Activated T-helper 2 cell treated with anti-CD3 and anti-CD28 coated beads, Interferon-gamma antibody, Interleukin-2, Interleukin-4, amounts not matched to agents 10 μg/mL and 5 μg/mL and 100 μg/mL, durations not matched to agents 14 hours and 24 hours and 36 hours (primary cell): ENCODE measurements at regions of chr2 and their contacts with region 1.

Region 1: GRCh38 chr2:240560480-240561326 is 546 bp downstream of the DUSP28 start:
- DNase-seq: peak; percentile 98
- H3K4me3 Mint-ChIP-seq: peak overlapping the region; percentile 83
- H3K27ac Mint-ChIP-seq: peak overlapping the region; percentile 87
- H3K4me1 Mint-ChIP-seq: peaks cover 63% of the 10 kb centered on the region
- H3K27me3 Mint-ChIP-seq: no peaks in the 10 kb centered on the region

Region 2: GRCh38 chr2:240387669-240388358 is 172.9 kb before region 1 on chr2:
- intact Hi-C with region 1: no loop called
- DNase-seq: no peak
- H3K4me3 Mint-ChIP-seq: no peak overlapping the region
- H3K27ac Mint-ChIP-seq: no peak overlapping the region
- H3K4me1 Mint-ChIP-seq: peaks cover 7% of the 10 kb centered on the region
- H3K27me3 Mint-ChIP-seq: no peaks in the 10 kb centered on the region

Region 3: GRCh38 chr2:240434728-240435456 is 125.8 kb before region 1 on chr2:
- intact Hi-C with region 1: loop called (anchors 2 kb)
- DNase-seq: peak; percentile 88
- H3K4me3 Mint-ChIP-seq: peak overlapping the region; percentile 85
- H3K27ac Mint-ChIP-seq: peak overlapping the region; percentile 65
- H3K4me1 Mint-ChIP-seq: peaks cover 9% of the 10 kb centered on the region
- H3K27me3 Mint-ChIP-seq: peaks cover 15% of the 10 kb centered on the region

Region 4: GRCh38 chr2:240586198-240586918 is 25.7 kb after region 1 on chr2 and contains the start of gene CAPN10:
- intact Hi-C with region 1: loop called (anchors 1 kb)
- DNase-seq: peak; percentile 97
- H3K4me3 Mint-ChIP-seq: peak within 1 kb of the TSS; percentile 97
- H3K27ac Mint-ChIP-seq: peak within 1 kb of the TSS; percentile 91
- H3K4me1 Mint-ChIP-seq: peaks cover 27% of the 10 kb centered on the region
- H3K27me3 Mint-ChIP-seq: no peaks in the 10 kb centered on the region
- total RNA-seq, gene CAPN10: 49.6 and 51.1 TPM in 2 replicates

Region 5: GRCh38 chr2:241149925-241150659 is 589.4 kb after region 1 on chr2 and contains the start of gene PPP1R7:
- intact Hi-C with region 1: loop called (anchors 10 kb)
- DNase-seq: peak; percentile 91
- H3K4me3 Mint-ChIP-seq: peak within 1 kb of the TSS; percentile 96
- H3K27ac Mint-ChIP-seq: peak within 1 kb of the TSS; percentile 90
- H3K4me1 Mint-ChIP-seq: peaks cover 38% of the 10 kb centered on the region
- H3K27me3 Mint-ChIP-seq: no peaks in the 10 kb centered on the region
- total RNA-seq, gene PPP1R7: 101 and 106 TPM in 2 replicates

Region 6: GRCh38 chr2:241315093-241315878 is 754.6 kb after region 1 on chr2 and contains the start of gene HDLBP:
- intact Hi-C with region 1: loop called (anchors 2 kb)
- DNase-seq: peak; percentile 100
- H3K4me3 Mint-ChIP-seq: peak within 1 kb of the TSS; percentile 94
- H3K27ac Mint-ChIP-seq: peak within 1 kb of the TSS; percentile 100
- H3K4me1 Mint-ChIP-seq: peaks cover 60% of the 10 kb centered on the region
- H3K27me3 Mint-ChIP-seq: no peaks in the 10 kb centered on the region
- total RNA-seq, gene HDLBP: 282 and 293 TPM in 2 replicates